Activated B cell treated with CpG ODN at 0.5 μM for 24 hours (primary cell): ENCODE measurements at regions of chr19 and their contacts with region 1.

Region 1: GRCh38 chr19:1269065-1269477 is at the start of gene CIRBP:
- DNase-seq: peak; percentile 99
- ATAC-seq: peak; percentile 72
- H3K4me3 Mint-ChIP-seq: peak within 1 kb of the TSS; percentile 86
- H3K27ac Mint-ChIP-seq: peak within 1 kb of the TSS; percentile 85
- H3K4me1 Mint-ChIP-seq: peaks cover 79% of the 10 kb centered on the region
- H3K27me3 Mint-ChIP-seq: no peaks in the 10 kb centered on the region
- CTCF ChIP-seq: no peak
- total RNA-seq, gene CIRBP: 399 and 400 TPM in 2 replicates

Region 2: GRCh38 chr19:796692-797527 is 472.2 kb before region 1 on chr19 and contains the start of gene PTBP1:
- CTCF ChIA-PET with region 1: no interaction called
- POLR2A ChIA-PET with region 1: interaction called, 8 read pairs
- intact Hi-C with region 1: loop called (anchors 2 kb)
- DNase-seq: peak; percentile 97
- ATAC-seq: peak; percentile 86
- H3K4me3 Mint-ChIP-seq: peak within 1 kb of the TSS; percentile 89
- H3K27ac Mint-ChIP-seq: peak within 1 kb of the TSS; percentile 79
- H3K4me1 Mint-ChIP-seq: peaks cover 34% of the 10 kb centered on the region
- H3K27me3 Mint-ChIP-seq: peaks cover under 1% of the 10 kb centered on the region
- CTCF ChIP-seq: no peak
- total RNA-seq, gene PTBP1: 404 and 417 TPM in 2 replicates

Region 3: DNA sequence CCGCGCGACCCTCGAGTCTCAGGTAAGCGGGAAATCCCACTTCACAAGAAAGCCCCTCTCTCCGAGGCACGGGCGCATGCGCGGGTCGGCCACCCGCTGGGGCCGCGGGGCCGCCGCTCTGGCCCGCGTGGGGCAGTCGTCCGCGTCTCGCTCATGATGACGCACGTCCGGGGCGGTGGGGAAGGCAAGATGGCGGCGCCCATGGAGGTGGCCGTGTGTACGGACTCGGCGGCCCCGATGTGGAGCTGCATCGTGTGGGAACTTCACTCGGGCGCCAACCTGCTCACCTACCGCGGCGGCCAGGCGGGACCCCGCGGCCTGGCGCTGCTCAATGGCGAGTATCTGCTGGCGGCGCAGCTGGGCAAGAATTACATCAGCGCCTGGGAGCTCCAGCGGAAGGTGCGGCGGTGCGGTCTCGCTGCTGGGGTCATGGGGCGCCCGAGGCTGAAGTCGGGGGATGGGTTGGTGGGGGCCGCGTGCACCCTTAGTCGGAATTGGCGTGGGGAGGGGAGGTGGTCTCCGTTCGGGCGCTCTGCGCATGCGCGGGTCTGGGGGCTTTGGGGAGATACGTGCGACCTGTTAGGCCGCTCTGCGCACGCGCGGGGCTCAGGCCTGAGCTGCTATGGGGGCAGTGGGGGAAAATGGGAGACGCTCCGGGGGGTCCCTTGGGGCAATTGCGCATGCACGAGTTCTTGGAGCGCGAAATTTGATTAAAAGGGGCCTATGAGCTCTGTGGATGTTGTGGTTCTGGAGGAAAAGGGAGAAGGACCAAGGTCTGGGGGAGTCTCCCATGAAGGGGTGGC is 284.7 kb before region 1 on chr19 and contains the start of gene WDR18:
- CTCF ChIA-PET with region 1: no interaction called
- POLR2A ChIA-PET with region 1: interaction called, 16 read pairs
- intact Hi-C with region 1: no loop called
- DNase-seq: peak; percentile 89
- ATAC-seq: peak; percentile 89
- H3K4me3 Mint-ChIP-seq: peak within 1 kb of the TSS; percentile 92
- H3K27ac Mint-ChIP-seq: peak within 1 kb of the TSS; percentile 89
- H3K4me1 Mint-ChIP-seq: peaks cover 18% of the 10 kb centered on the region
- H3K27me3 Mint-ChIP-seq: no peaks in the 10 kb centered on the region
- CTCF ChIP-seq: no peak
- total RNA-seq, gene WDR18: 66.5 and 84.7 TPM in 2 replicates

Region 4: GRCh38 chr19:1064661-1065605 is 204.1 kb before region 1 on chr19:
- CTCF ChIA-PET with region 1: interaction called, 3 read pairs
- POLR2A ChIA-PET with region 1: interaction called, 25 read pairs
- intact Hi-C with region 1: no loop called
- DNase-seq: peak; percentile 68
- ATAC-seq: peak; percentile 36
- H3K4me3 Mint-ChIP-seq: peak overlapping the region; percentile 60
- H3K27ac Mint-ChIP-seq: no peak overlapping the region
- H3K4me1 Mint-ChIP-seq: peaks cover 38% of the 10 kb centered on the region
- H3K27me3 Mint-ChIP-seq: no peaks in the 10 kb centered on the region
- CTCF ChIP-seq: peak; percentile 33

Region 5: GRCh38 chr19:1103708-1104310 is 165.3 kb before region 1 on chr19 and contains the start of gene GPX4:
- CTCF ChIA-PET with region 1: no interaction called
- POLR2A ChIA-PET with region 1: interaction called, 11 read pairs
- intact Hi-C with region 1: no loop called
- DNase-seq: peak; percentile 93
- ATAC-seq: peak; percentile 86
- H3K4me3 Mint-ChIP-seq: peak within 1 kb of the TSS; percentile 81
- H3K27ac Mint-ChIP-seq: peak within 1 kb of the TSS; percentile 83
- H3K4me1 Mint-ChIP-seq: peaks cover 55% of the 10 kb centered on the region
- H3K27me3 Mint-ChIP-seq: no peaks in the 10 kb centered on the region
- CTCF ChIP-seq: no peak
- total RNA-seq, gene GPX4: 213 and 218 TPM in 2 replicates

Region 6: GRCh38 chr19:1173845-1174809 is 94.9 kb before region 1 on chr19 and contains the start of gene SBNO2:
- CTCF ChIA-PET with region 1: no interaction called
- POLR2A ChIA-PET with region 1: no interaction called
- intact Hi-C with region 1: no loop called
- DNase-seq: peak; percentile 98
- ATAC-seq: peak; percentile 93
- H3K4me3 Mint-ChIP-seq: peak within 1 kb of the TSS; percentile 91
- H3K27ac Mint-ChIP-seq: peak within 1 kb of the TSS; percentile 89
- H3K4me1 Mint-ChIP-seq: peaks cover 26% of the 10 kb centered on the region
- H3K27me3 Mint-ChIP-seq: no peaks in the 10 kb centered on the region
- CTCF ChIP-seq: no peak
- total RNA-seq, gene SBNO2: 111 and 127 TPM in 2 replicates

Region 7: GRCh38 chr19:1249298-1249989 is 19.6 kb before region 1 on chr19:
- CTCF ChIA-PET with region 1: interaction called, 540 read pairs
- POLR2A ChIA-PET with region 1: interaction called, 824 read pairs
- intact Hi-C with region 1: loop called (anchors 1 kb)
- DNase-seq: peak; percentile 84
- ATAC-seq: peak; percentile 49
- H3K4me3 Mint-ChIP-seq: peak overlapping the region; percentile 80
- H3K27ac Mint-ChIP-seq: peak overlapping the region; percentile 81
- H3K4me1 Mint-ChIP-seq: peaks cover 31% of the 10 kb centered on the region
- H3K27me3 Mint-ChIP-seq: no peaks in the 10 kb centered on the region
- CTCF ChIP-seq: no peak

Region 8: GRCh38 chr19:1406774-1407499 is 137.9 kb after region 1 on chr19:
- CTCF ChIA-PET with region 1: no interaction called
- POLR2A ChIA-PET with region 1: interaction called, 7 read pairs
- intact Hi-C with region 1: loop called (anchors 2 kb)
- DNase-seq: peak; percentile 100
- ATAC-seq: peak; percentile 82
- H3K4me3 Mint-ChIP-seq: peak overlapping the region; percentile 78
- H3K27ac Mint-ChIP-seq: peak overlapping the region; percentile 84
- H3K4me1 Mint-ChIP-seq: peaks cover 46% of the 10 kb centered on the region
- H3K27me3 Mint-ChIP-seq: peaks cover 6% of the 10 kb centered on the region
- CTCF ChIP-seq: no peak

Region 9: DNA sequence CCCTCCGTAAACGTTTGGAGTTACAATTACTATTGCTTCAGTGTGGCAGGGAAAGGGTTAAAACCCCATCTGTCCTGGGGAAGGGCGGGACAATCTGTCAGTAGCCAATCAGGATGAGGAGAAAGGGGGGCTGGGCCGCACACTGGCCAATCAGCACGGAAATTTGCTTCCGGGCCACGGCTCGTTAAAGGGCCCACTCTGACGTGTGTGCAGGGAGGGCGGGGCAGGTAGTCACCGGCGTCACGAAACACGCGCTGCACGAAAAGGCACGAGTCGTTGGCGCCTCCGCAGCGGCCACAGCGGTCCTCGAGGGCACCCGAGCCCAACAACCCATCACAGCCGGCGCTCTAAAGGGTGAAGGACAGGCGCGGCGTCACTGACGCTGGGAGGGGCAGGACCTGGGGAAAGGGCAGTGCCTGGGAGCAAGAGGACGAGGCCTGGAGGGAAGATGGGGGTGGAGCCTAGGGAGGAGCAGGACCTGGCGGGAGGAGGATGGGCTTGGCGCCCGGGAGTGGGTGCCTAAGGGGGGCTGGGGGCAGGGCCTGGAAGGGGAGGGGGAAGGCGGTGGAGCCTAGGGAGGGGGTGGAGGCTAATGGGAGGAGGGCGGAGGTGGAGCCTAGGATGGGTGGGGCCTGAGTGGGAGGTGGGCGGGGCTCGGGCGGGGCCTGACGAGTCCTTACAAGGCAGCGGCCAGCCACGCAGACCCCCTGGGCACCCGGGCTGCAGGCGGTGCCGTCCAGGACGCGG is 238.9 kb after region 1 on chr19:
- CTCF ChIA-PET with region 1: no interaction called
- POLR2A ChIA-PET with region 1: no interaction called
- intact Hi-C with region 1: no loop called
- DNase-seq: peak; percentile 72
- ATAC-seq: peak; percentile 89
- H3K4me3 Mint-ChIP-seq: peak overlapping the region; percentile 80
- H3K27ac Mint-ChIP-seq: peak overlapping the region; percentile 80
- H3K4me1 Mint-ChIP-seq: peaks cover 14% of the 10 kb centered on the region
- H3K27me3 Mint-ChIP-seq: peaks cover 39% of the 10 kb centered on the region
- CTCF ChIP-seq: no peak